CD4-positive, alpha-beta T cell (primary cell): ENCODE measurements at regions of chr5 and their contacts with region 1.

Region 1: GRCh38 chr5:103232393-103232999 is 26.1 kb upstream of the MACIR start:
- DNase-seq: peak in 4 of 14 experiments; percentile 31 to 59 (median 49)
- ATAC-seq: peak; percentile 80
- H3K4me3 ChIP-seq: no peak overlapping the region
- H3K4me3 Mint-ChIP-seq: no peak overlapping the region
- H3K27ac ChIP-seq: no peak overlapping the region
- H3K27ac Mint-ChIP-seq: no peak overlapping the region
- H3K4me1 ChIP-seq: no peaks in the 10 kb centered on the region
- H3K4me1 Mint-ChIP-seq: no peaks in the 10 kb centered on the region
- H3K27me3 ChIP-seq: no peaks in the 10 kb centered on the region
- H3K27me3 Mint-ChIP-seq: peaks cover 4% of the 10 kb centered on the region
- CTCF ChIP-seq: peak; percentile 75

Region 2: GRCh38 chr5:103475629-103476240 is 243.2 kb after region 1 on chr5:
- CTCF ChIA-PET with region 1: interaction called, 9 read pairs
- POLR2A ChIA-PET with region 1: interaction called, 3 read pairs
- intact Hi-C with region 1: loop called in 1 of 2 experiments (anchors 1 kb)
- DNase-seq: peak in 3 of 14 experiments; percentile 35 to 44 (median 35)
- ATAC-seq: no peak
- H3K4me3 ChIP-seq: no peak overlapping the region
- H3K4me3 Mint-ChIP-seq: no peak overlapping the region
- H3K27ac ChIP-seq: no peak overlapping the region
- H3K27ac Mint-ChIP-seq: no peak overlapping the region
- H3K4me1 ChIP-seq: no peaks in the 10 kb centered on the region
- H3K4me1 Mint-ChIP-seq: no peaks in the 10 kb centered on the region
- H3K27me3 ChIP-seq: peaks cover 0 to 3% of the 10 kb centered on the region in 2 experiments
- H3K27me3 Mint-ChIP-seq: peaks cover 10% of the 10 kb centered on the region
- CTCF ChIP-seq: peak; percentile 69